ENCODE measurements at regions of chr3 and their contacts with region 1.

Region 1: DNA sequence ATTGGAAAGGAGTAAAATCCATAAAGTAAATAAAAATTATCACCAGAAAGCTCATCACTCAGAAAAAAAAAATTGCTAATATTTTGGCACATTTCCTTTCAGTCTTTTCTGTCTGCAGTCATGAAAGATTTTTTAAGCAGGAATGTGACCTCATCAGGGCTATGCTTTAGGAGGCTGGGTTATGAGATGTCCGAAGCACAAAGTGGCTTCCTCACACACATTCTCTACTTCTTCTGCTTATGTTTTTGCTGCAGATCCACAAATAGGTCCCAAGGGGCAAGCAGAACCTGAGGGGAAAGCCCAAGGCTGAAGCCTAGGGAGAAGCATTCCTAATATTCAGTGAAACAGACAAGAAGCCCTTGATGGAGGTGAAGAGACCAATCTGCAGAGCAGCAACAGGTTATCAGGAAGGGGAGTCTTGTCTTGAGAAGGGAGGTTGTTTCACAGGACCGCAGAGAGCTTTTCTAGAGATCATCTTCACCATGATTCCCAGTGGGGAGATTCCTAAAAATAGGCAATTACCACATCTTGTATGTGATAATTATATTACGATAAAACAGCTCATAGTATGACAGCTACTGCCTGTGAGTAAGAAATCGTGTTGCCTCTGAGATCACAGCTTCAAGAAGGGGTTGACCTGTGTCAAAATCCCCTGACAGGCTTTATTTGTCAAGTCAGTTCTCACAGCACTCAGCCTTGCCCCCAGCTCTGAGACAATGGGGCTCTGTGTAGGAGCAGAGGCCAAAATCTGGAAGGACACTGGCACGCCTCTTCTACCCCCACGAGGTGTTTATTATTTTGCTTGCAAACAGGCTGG is 60.5 kb downstream of the IGF2BP2 start:
- DNase-seq: no peak
- H3K4me3 ChIP-seq: no peak overlapping the region
- CTCF ChIP-seq: no peak

Region 2: GRCh38 chr3:185605566-185605965 is 158.8 kb before region 1 on chr3:
- CTCF ChIA-PET with region 1: no interaction called
- POLR2A ChIA-PET with region 1: no interaction called
- DNase-seq: no peak
- H3K4me3 ChIP-seq: no peak overlapping the region
- CTCF ChIP-seq: no peak

Region 3: GRCh38 chr3:185677146-185677829 is 87.1 kb before region 1 on chr3:
- CTCF ChIA-PET with region 1: interaction called, 50 read pairs
- POLR2A ChIA-PET with region 1: no interaction called
- DNase-seq: no peak
- H3K4me3 ChIP-seq: no peak overlapping the region
- CTCF ChIP-seq: peak; percentile 55

Region 4: DNA sequence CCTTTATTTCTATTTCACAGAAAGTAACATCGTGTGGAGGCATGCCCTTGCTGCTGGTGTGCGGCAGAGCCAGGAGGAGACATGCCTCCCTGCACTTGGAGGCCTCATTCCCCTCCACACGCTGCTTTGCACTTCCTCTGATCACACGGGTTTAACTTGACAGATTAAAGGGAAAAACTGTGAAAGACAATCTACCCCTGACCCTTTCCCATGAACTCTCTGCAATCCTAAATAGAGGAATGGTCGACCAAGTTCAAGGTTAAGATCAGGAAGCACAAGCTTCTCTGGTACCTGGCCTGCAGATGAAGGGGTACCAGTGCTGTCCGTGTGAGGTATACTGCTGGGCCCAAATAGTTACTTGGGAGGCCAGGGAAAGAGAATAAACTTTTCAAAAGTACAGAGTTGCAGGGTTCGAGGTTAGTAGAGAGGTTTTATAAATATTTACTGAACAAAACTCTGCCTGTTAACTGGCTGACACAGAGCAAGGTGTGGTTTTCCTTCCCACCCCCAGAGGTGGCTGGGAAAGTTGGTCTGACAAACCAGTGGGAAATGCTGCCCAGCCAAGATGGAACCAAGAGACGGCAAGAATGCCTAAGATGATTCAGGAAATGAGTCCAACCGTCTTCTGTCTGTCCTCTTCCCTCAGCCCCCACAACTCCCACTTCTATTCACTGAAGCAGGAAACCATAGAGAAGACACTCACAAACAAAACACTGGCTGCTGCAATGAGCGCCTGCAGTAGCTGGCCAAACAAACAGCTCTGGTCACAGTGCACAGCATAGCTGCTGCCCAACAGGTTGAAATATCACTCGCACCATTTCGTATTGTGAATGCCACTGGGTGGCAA is 19.2 kb before region 1 on chr3:
- CTCF ChIA-PET with region 1: interaction called, 20 read pairs
- POLR2A ChIA-PET with region 1: no interaction called
- DNase-seq: peak; percentile 74
- H3K4me3 ChIP-seq: no peak overlapping the region
- CTCF ChIP-seq: no peak

Region 5: GRCh38 chr3:185781759-185782158 is 17.4 kb after region 1 on chr3:
- CTCF ChIA-PET with region 1: interaction called, 146 read pairs
- POLR2A ChIA-PET with region 1: no interaction called
- DNase-seq: peak; percentile 62
- H3K4me3 ChIP-seq: no peak overlapping the region
- CTCF ChIP-seq: no peak

Region 6: DNA sequence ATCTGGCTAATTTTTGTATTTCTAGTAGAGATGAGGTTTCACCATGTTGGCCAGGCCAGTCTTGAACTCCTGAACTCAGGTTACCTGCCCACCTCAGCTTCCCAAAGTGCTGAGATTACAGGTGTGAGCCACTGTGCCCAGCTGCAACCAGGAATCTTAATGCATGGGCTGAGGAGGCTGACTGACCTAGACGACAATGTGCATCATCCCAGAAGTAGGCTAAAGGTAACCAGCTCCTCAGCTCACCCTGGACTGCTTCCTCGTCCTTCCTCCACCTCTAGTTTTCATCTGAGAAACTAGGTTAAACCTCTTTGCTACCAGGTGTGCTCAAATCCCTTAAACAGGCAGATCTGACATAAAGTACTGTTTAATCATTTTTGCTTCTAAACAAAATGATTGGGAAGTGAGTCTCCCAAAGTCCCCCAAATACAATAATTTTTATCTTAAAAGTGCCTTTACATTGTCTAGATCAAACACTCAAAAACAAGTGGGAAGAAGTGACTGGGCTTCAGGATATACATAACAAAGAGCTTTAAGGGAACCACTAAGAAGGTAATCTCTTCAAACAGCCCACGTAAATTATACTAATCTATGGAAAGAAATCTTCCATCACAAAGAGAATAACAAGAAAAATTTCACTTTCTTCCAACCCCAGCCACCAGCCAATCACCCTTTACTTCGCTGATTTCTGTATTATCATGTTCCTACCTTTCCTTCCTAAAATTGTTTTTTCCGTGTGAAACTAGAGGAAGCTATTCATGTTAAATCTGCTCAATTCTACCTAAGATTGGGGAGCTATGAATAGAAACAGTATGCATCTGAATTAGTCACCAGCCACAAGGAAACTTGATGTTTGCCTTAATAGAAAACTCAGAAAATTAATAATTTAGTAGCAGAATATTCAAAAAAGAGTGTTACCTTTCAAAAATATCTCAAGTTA is 25.8 kb after region 1 on chr3:
- CTCF ChIA-PET with region 1: interaction called, 20 read pairs
- POLR2A ChIA-PET with region 1: no interaction called
- DNase-seq: no peak
- H3K4me3 ChIP-seq: no peak overlapping the region
- CTCF ChIP-seq: no peak

Region 7: GRCh38 chr3:185824476-185825378 is 60.4 kb after region 1 on chr3 and contains the start of gene IGF2BP2:
- CTCF ChIA-PET with region 1: interaction called, 10 read pairs
- POLR2A ChIA-PET with region 1: no interaction called
- DNase-seq: no peak
- H3K4me3 ChIP-seq: peak within 1 kb of the TSS; percentile 92
- CTCF ChIP-seq: peak; percentile 33

Region 8: DNA sequence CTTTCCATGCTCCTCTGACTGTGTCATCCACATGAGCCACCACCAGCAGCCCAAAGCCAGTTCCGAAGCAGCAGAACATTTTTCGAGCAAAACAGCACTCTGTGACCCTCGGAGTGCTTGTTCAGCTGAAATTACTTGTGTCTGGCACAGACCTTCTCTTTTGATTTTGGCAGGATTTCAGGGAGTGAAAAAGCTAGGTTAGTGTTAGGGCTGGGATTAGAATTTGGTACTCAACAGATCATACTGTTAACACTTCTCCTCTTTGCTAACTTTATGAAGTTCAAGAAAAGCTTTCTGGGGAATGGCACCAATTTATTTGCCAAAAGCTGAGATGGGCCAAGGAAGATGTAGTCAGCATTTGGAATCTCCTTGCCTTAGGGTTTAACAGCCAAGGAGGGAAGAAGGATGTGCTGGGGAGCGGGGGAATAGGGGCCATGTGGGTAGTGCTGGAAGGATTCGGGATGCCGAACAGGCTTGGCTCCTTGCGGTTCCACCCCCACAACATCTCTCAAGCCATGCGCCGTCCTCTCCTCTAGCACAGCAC is 228.5 kb after region 1 on chr3:
- CTCF ChIA-PET with region 1: no interaction called
- POLR2A ChIA-PET with region 1: no interaction called
- DNase-seq: no peak
- H3K4me3 ChIP-seq: no peak overlapping the region
- CTCF ChIP-seq: no peak

Region 9: DNA sequence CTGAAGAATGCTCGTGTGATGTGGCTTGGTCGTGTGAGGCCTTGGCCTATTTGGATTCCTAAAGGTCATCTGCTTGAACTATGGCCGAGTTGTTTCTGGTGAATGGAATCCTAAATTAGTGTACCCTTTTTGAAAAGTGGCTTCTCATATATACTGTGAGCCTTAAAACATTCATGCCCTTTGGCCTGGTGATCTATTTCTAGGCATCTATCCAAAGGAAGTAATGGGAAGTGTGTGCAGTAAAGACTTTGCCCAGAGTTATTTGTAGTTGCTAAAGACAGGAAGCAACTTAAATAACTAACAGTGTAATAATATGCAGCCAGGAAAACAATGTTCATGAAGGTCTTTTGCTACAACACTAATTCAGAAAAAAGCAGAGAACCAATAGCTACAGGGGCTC is 594.7 kb after region 1 on chr3:
- CTCF ChIA-PET with region 1: no interaction called
- POLR2A ChIA-PET with region 1: no interaction called
- DNase-seq: no peak
- H3K4me3 ChIP-seq: no peak overlapping the region
- CTCF ChIP-seq: no peak